Activated B cell treated with CpG ODN at 0.5 μM for 24 hours (primary cell): ENCODE measurements at regions of chr14 and their contacts with region 1.

Region 1: GRCh38 chr14:93939304-93940229 is 12.4 kb downstream of the FAM181A start:
- DNase-seq: peak; percentile 96
- ATAC-seq: peak; percentile 92
- H3K4me3 Mint-ChIP-seq: peak overlapping the region; percentile 69
- H3K27ac Mint-ChIP-seq: no peak overlapping the region
- H3K4me1 Mint-ChIP-seq: peaks cover 10% of the 10 kb centered on the region
- H3K27me3 Mint-ChIP-seq: peaks cover 5% of the 10 kb centered on the region
- CTCF ChIP-seq: peak; percentile 60

Region 2: GRCh38 chr14:93953263-93953662 is 13.7 kb after region 1 on chr14:
- CTCF ChIA-PET with region 1: interaction called, 126 read pairs
- POLR2A ChIA-PET with region 1: interaction called, 6 read pairs
- intact Hi-C with region 1: no loop called
- DNase-seq: no peak
- ATAC-seq: no peak
- H3K4me3 Mint-ChIP-seq: no peak overlapping the region
- H3K27ac Mint-ChIP-seq: no peak overlapping the region
- H3K4me1 Mint-ChIP-seq: peaks cover 50% of the 10 kb centered on the region
- H3K27me3 Mint-ChIP-seq: no peaks in the 10 kb centered on the region
- CTCF ChIP-seq: no peak

Region 3: DNA sequence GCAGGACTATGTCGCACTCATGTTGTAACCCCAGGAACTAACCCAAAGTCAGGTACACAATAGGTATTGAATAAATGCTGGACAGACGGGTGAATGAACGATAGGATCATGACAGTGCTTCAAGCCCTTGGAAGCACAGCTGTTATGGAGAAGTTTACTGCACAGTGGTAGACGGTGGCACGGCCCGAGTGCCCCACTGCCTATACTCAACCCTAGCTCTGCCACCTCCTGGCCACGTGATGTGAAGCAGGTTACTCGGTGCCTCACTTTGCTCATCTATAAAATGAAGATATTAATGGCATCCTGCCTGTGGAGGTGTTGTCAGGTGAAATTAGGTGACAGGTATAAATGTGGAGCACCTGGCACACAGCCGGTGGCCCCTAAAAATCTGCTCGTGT is 31.0 kb after region 1 on chr14:
- CTCF ChIA-PET with region 1: interaction called, 498 read pairs
- POLR2A ChIA-PET with region 1: interaction called, 91 read pairs
- intact Hi-C with region 1: loop called (anchors 1 kb)
- DNase-seq: peak; percentile 42
- ATAC-seq: peak; percentile 51
- H3K4me3 Mint-ChIP-seq: peak overlapping the region; percentile 89
- H3K27ac Mint-ChIP-seq: peak overlapping the region; percentile 89
- H3K4me1 Mint-ChIP-seq: peaks cover 70% of the 10 kb centered on the region
- H3K27me3 Mint-ChIP-seq: peaks cover 8% of the 10 kb centered on the region
- CTCF ChIP-seq: no peak

Region 4: GRCh38 chr14:94001501-94002396 is 62.2 kb after region 1 on chr14:
- CTCF ChIA-PET with region 1: interaction called, 307 read pairs
- POLR2A ChIA-PET with region 1: interaction called, 18 read pairs
- intact Hi-C with region 1: loop called (anchors 1 kb)
- DNase-seq: peak; percentile 52
- ATAC-seq: peak; percentile 89
- H3K4me3 Mint-ChIP-seq: no peak overlapping the region
- H3K27ac Mint-ChIP-seq: no peak overlapping the region
- H3K4me1 Mint-ChIP-seq: no peaks in the 10 kb centered on the region
- H3K27me3 Mint-ChIP-seq: peaks cover 27% of the 10 kb centered on the region
- CTCF ChIP-seq: peak; percentile 88

Region 5: DNA sequence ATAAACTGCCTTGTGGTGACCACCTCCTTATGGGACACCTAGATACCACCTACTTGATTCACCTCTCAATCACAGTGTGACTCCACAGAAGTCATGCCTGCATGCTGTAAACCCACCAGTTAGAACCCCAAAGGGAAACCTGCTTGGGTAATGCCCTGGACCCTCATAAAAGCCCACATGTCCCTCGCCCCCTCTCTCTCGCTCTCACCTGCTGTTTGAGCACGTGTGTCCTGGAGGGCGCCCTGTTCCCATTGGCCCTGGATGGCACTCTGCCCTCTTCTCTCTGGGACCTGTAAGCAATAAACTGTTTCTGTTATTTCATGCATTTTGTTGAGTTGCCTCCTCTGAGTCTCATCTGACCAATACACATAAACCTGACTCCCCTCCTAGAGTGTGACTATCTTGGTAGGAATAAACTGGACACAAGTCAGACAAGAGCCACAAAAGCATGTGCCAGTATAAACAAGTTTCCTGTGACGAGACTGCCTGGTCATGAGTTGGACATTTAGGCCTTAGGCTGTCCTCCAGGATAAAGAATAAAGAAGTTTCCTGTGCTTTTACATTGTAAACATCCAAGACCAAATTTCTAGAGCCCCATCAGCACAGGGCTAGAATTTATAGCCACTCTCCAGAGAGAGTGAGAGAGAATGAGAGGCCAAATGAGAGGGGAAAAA is 181.2 kb after region 1 on chr14:
- CTCF ChIA-PET with region 1: no interaction called
- POLR2A ChIA-PET with region 1: no interaction called
- intact Hi-C with region 1: no loop called
- DNase-seq: no peak
- ATAC-seq: no peak
- H3K4me3 Mint-ChIP-seq: no peak overlapping the region
- H3K27ac Mint-ChIP-seq: no peak overlapping the region
- H3K4me1 Mint-ChIP-seq: no peaks in the 10 kb centered on the region
- H3K27me3 Mint-ChIP-seq: peaks cover 28% of the 10 kb centered on the region
- CTCF ChIP-seq: no peak

Region 6: DNA sequence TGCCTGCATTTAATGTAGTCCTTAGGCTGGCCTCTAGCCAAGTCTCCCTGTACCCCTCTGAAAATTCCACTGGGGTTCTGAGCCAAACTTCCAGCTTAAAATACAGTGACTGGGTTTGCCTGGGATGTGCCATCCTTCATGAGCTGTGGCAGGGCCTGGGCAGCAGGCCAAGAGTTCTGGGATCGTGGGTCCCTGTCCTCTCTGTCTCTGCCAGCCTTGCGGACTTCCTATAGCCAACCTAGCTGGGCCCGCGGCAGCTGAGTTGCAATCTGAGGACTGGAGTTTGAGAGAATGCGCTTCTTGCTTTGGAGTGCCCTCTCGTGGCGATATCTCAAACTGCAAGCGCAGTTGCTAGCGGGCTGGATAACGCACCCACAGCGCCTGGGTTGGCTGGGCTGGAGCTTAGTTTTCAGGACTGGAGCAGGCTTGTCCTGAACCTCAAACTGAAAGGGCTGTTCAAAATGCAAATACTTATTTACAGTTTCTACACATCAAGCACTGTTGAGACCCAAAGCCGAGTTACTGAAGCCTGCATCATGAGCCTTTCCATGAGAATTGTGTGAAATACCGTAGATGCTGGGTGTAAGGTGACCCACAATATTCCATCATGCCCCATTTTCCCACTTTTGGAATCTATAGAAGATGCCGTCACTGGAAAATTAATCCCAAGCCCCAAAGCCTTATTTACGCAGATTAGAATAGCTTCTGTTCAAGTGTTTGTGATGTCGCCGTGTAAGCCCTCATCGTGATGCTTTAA is 197.2 kb after region 1 on chr14:
- CTCF ChIA-PET with region 1: interaction called, 21 read pairs
- POLR2A ChIA-PET with region 1: no interaction called
- intact Hi-C with region 1: loop called (anchors 2 kb)
- DNase-seq: peak; percentile 72
- ATAC-seq: peak; percentile 95
- H3K4me3 Mint-ChIP-seq: no peak overlapping the region
- H3K27ac Mint-ChIP-seq: no peak overlapping the region
- H3K4me1 Mint-ChIP-seq: peaks cover 3% of the 10 kb centered on the region
- H3K27me3 Mint-ChIP-seq: peaks cover 26% of the 10 kb centered on the region
- CTCF ChIP-seq: no peak

Region 7: DNA sequence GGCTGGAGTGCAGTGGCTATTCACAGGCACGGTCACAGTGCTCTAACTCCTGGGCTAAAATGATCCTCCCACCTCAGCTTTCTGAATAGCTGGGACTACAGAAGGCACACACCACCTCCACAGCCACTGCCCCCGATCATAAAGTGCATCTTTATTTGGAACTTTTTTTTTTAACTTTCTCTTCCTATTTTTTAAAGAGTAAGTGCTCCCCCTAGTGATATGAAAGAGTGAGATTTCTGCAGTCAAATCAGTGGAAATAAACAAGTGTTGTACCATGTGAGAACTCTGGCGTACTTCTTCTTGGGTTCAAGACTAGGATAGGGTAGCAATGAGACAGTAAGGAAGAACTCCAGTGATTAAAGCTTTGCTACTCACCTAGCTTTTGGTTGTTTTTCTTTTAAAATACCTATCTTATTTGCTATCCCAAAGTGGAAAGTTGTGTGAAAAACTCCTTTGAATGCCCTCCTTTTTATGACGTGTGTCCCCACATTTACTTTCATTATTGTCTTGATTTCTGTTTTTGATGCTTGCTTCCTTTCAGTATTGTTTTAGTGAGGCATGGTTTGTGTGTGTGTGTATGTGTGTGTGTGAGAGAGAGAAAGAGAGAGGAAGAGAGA is 241.2 kb after region 1 on chr14:
- CTCF ChIA-PET with region 1: interaction called, 10 read pairs
- POLR2A ChIA-PET with region 1: interaction called, 4 read pairs
- intact Hi-C with region 1: loop called (anchors 1 kb)
- DNase-seq: no peak
- ATAC-seq: peak; percentile 66
- H3K4me3 Mint-ChIP-seq: no peak overlapping the region
- H3K27ac Mint-ChIP-seq: no peak overlapping the region
- H3K4me1 Mint-ChIP-seq: peaks cover 9% of the 10 kb centered on the region
- H3K27me3 Mint-ChIP-seq: peaks cover 39% of the 10 kb centered on the region
- CTCF ChIP-seq: peak; percentile 46